ENCODE measurements at regions of chr19 and their contacts with region 1.

Region 1: GRCh38 chr19:12722566-12723380 is 959 bp downstream of the TNPO2 start:
- DNase-seq: peak; percentile 97
- ATAC-seq: peak; percentile 84
- H3K4me3 Mint-ChIP-seq: peak overlapping the region; percentile 99
- H3K27ac Mint-ChIP-seq: peak overlapping the region; percentile 90
- H3K4me1 Mint-ChIP-seq: peaks cover 35% of the 10 kb centered on the region
- H3K27me3 Mint-ChIP-seq: no peaks in the 10 kb centered on the region

Region 2: GRCh38 chr19:12596927-12597548 is 125.7 kb before region 1 on chr19:
- CTCF ChIA-PET with region 1: no interaction called
- POLR2A ChIA-PET with region 1: no interaction called
- intact Hi-C with region 1: no loop called
- DNase-seq: no peak
- ATAC-seq: no peak
- H3K4me3 Mint-ChIP-seq: no peak overlapping the region
- H3K27ac Mint-ChIP-seq: no peak overlapping the region
- H3K4me1 Mint-ChIP-seq: no peaks in the 10 kb centered on the region
- H3K27me3 Mint-ChIP-seq: no peaks in the 10 kb centered on the region

Region 3: GRCh38 chr19:12666265-12667048 is 56.3 kb before region 1 on chr19 and contains the starts of genes MAN2B1 and WDR83:
- CTCF ChIA-PET with region 1: no interaction called
- POLR2A ChIA-PET with region 1: no interaction called
- intact Hi-C with region 1: loop called in 1 of 2 experiments (anchors 1 kb)
- DNase-seq: peak; percentile 90
- ATAC-seq: peak; percentile 73
- H3K4me3 Mint-ChIP-seq: peak within 1 kb of the TSS; percentile 86
- H3K27ac Mint-ChIP-seq: peak within 1 kb of the TSS; percentile 83
- H3K4me1 Mint-ChIP-seq: peaks cover 43% of the 10 kb centered on the region
- H3K27me3 Mint-ChIP-seq: no peaks in the 10 kb centered on the region
- total RNA-seq, gene MAN2B1: 118 to 154 TPM
- total RNA-seq, gene WDR83: 13.5 to 19.5 TPM

Region 4: GRCh38 chr19:12757544-12758274 is 34.9 kb after region 1 on chr19:
- CTCF ChIA-PET with region 1: interaction called, 12 read pairs
- POLR2A ChIA-PET with region 1: no interaction called
- intact Hi-C with region 1: loop called (anchors 1 to 5 kb)
- DNase-seq: peak; percentile 83
- ATAC-seq: peak; percentile 84
- H3K4me3 Mint-ChIP-seq: peak overlapping the region; percentile 19
- H3K27ac Mint-ChIP-seq: no peak overlapping the region
- H3K4me1 Mint-ChIP-seq: peaks cover 6% of the 10 kb centered on the region
- H3K27me3 Mint-ChIP-seq: peaks cover 20% of the 10 kb centered on the region

Region 5: GRCh38 chr19:12806239-12807081 is 83.7 kb after region 1 on chr19 and contains the start of gene RNASEH2A:
- CTCF ChIA-PET with region 1: no interaction called
- POLR2A ChIA-PET with region 1: no interaction called
- intact Hi-C with region 1: loop called in 1 of 2 experiments (anchors 1 kb)
- DNase-seq: peak; percentile 94
- ATAC-seq: peak; percentile 93
- H3K4me3 Mint-ChIP-seq: peak within 1 kb of the TSS; percentile 89
- H3K27ac Mint-ChIP-seq: peak within 1 kb of the TSS; percentile 80
- H3K4me1 Mint-ChIP-seq: peaks cover 24% of the 10 kb centered on the region
- H3K27me3 Mint-ChIP-seq: no peaks in the 10 kb centered on the region
- total RNA-seq, gene RNASEH2A: 27.0 to 51.1 TPM

Region 6: DNA sequence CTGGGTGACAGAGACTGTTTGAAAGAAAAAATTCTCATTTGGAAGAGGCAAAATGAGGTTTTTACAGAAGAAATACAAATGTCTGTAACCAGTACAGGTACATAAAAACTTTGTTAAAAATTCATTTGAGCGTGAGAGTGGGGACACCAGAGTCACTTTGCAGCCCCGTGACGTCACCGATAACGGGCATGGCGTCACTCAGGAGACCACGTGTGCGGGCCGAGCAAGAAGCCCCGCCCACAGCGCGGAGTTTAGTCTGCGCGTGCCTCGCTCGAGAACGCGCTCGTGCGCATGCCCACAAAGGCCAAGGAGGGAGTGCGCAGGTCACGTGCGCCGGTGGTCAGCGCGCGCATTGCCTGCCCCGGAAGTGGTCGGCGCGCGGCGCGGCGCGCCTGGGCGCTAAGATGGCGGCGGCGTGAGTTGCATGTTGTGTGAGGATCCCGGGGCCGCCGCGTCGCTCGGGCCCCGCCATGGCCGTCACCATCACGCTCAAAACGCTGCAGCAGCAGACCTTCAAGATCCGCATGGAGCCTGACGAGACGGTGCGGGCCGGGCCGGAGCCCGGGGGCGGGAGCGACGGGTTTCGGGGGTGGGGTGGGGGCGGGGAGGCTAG is 222.8 kb after region 1 on chr19 and contains the start of gene RAD23A:
- CTCF ChIA-PET with region 1: no interaction called
- POLR2A ChIA-PET with region 1: no interaction called
- intact Hi-C with region 1: loop called in 1 of 2 experiments (anchors 5 kb)
- DNase-seq: peak; percentile 100
- ATAC-seq: peak; percentile 81
- H3K4me3 Mint-ChIP-seq: peak within 1 kb of the TSS; percentile 88
- H3K27ac Mint-ChIP-seq: peak within 1 kb of the TSS; percentile 97
- H3K4me1 Mint-ChIP-seq: peaks cover 55% of the 10 kb centered on the region
- H3K27me3 Mint-ChIP-seq: no peaks in the 10 kb centered on the region
- total RNA-seq, gene RAD23A: 189 to 265 TPM